ENCODE measurements at regions of chr5 and their contacts with region 1.

Region 1: GRCh38 chr5:54415896-54416601 is 39.5 kb upstream of the HSPB3 start:
- DNase-seq: peak in 1 of 2 experiments; percentile 49
- H3K4me3 ChIP-seq: no peak overlapping the region
- H3K4me3 Mint-ChIP-seq: no peak overlapping the region
- H3K27ac Mint-ChIP-seq: peak overlapping the region; percentile 16
- H3K4me1 ChIP-seq: peaks cover 24% of the 10 kb centered on the region
- H3K4me1 Mint-ChIP-seq: peaks cover 39% of the 10 kb centered on the region
- H3K27me3 ChIP-seq: no peaks in the 10 kb centered on the region
- H3K27me3 Mint-ChIP-seq: no peaks in the 10 kb centered on the region
- CTCF ChIP-seq: no peak

Region 2: DNA sequence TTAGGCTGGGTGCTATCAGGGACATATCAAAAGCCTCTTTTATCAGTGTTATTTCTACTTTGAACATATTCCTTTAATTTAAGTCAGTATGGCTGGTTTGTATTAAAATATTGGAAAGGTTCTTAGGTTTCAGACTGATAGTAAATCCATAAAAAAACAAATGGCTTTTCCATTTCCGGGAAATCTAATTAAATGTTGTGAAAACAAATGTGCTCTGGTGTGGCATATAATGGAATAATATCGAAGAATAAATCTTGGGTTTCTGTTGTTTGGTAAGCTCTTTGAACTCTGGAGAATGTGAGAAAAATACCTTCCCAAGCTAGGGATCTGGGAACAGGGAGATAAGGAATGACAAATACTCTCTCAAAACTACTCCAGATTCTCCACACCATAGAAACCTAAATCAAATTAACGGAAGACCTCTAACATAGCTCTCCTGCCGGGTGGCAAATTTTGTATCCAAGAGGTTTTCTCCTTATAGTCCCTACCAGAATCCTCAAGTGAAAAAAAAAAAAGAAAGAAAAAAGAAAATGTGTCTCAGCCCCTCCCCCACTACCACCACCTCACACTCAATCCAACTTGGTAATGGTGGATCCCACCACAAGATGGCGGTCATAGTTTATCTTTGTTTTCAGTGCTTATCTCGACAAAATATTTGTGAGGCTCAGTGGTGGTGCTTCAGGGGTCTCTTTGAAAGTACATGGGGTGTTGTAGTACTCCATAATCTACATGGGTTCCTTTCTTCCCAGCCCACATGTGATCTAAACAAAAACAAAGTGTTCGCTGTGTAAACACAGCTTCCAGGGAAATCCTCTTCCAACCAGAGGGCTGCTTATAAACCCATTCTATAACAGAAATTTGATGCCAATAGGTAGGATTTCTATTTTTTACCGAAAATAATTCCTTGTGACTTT is 990.2 kb before region 1 on chr5:
- CTCF ChIA-PET with region 1: no interaction called
- POLR2A ChIA-PET with region 1: no interaction called
- intact Hi-C with region 1: loop called (anchors 5 kb)
- DNase-seq: peak; percentile 47 to 54
- H3K4me3 ChIP-seq: no peak overlapping the region
- H3K4me3 Mint-ChIP-seq: no peak overlapping the region
- H3K27ac Mint-ChIP-seq: no peak overlapping the region
- H3K4me1 ChIP-seq: peaks cover 8% of the 10 kb centered on the region; the same call in 1 of the 2 replicates
- H3K4me1 Mint-ChIP-seq: peaks cover 23% of the 10 kb centered on the region
- H3K27me3 ChIP-seq: no peaks in the 10 kb centered on the region
- H3K27me3 Mint-ChIP-seq: peaks cover 12% of the 10 kb centered on the region
- CTCF ChIP-seq: peak; percentile 29 to 45

Region 3: DNA sequence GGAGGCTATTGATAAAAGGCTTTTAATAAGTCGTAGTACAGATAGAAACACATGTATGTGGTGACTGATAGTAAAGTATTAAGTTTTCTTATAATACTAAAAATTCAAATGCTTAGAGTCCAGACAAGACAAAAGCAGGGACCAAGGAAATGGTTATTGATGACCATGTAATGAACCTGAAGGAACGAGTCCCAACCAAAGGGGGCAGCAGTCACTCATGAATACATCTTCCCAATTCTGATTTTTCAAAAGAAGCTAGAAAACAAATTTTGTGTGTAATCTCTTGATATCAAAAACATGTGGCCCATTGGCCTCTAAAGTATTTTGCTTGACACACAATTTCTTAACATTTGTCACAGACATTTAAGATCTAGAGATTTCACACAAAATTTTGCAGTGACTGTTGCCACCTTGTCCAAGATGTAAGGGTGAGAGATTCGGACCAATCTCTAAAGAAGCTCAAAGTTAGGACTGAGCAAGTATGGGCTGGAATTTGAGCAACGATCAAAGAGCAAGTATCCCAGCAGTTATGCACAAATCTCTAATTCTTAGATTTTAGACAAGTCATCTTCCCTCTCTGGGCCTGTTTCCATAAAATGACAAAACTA is 172.5 kb before region 1 on chr5:
- CTCF ChIA-PET with region 1: interaction called, 10 read pairs
- POLR2A ChIA-PET with region 1: no interaction called
- intact Hi-C with region 1: loop called (anchors 1 kb)
- DNase-seq: peak in 1 of 2 experiments; percentile 62
- H3K4me3 ChIP-seq: no peak overlapping the region
- H3K4me3 Mint-ChIP-seq: no peak overlapping the region
- H3K27ac Mint-ChIP-seq: no peak overlapping the region
- H3K4me1 ChIP-seq: 0 out of 2 replicates have a peak, but pooled peaks cover 9% of the 10 kb centered on the region
- H3K4me1 Mint-ChIP-seq: peaks cover 10% of the 10 kb centered on the region
- H3K27me3 ChIP-seq: no peaks in the 10 kb centered on the region
- H3K27me3 Mint-ChIP-seq: no peaks in the 10 kb centered on the region
- CTCF ChIP-seq: peak; percentile 78 to 83

Region 4: GRCh38 chr5:54385989-54386388 is 30.1 kb before region 1 on chr5:
- CTCF ChIA-PET with region 1: interaction called, 4 read pairs
- POLR2A ChIA-PET with region 1: no interaction called
- intact Hi-C with region 1: loop called (anchors 1 kb)
- DNase-seq: no peak
- H3K4me3 ChIP-seq: no peak overlapping the region
- H3K4me3 Mint-ChIP-seq: no peak overlapping the region
- H3K27ac Mint-ChIP-seq: no peak overlapping the region
- H3K4me1 ChIP-seq: peaks cover 47% of the 10 kb centered on the region
- H3K4me1 Mint-ChIP-seq: peaks cover 26% of the 10 kb centered on the region
- H3K27me3 ChIP-seq: no peaks in the 10 kb centered on the region
- H3K27me3 Mint-ChIP-seq: no peaks in the 10 kb centered on the region
- CTCF ChIP-seq: no peak

Measured in Caco-2 (cell line).